CD4-positive, alpha-beta memory T cell (primary cell): ENCODE measurements at regions of chr2 and their contacts with region 1.

Region 1: GRCh38 chr2:136238286-136239078 is 120.5 kb upstream of the CXCR4 start:
- DNase-seq: peak; percentile 72 to 83 (median 75)
- H3K4me3 ChIP-seq: no peak overlapping the region
- H3K4me3 Mint-ChIP-seq: peak overlapping the region; percentile 4 to 75 (median 40)
- H3K27ac ChIP-seq: peak overlapping the region; percentile 39
- H3K27ac Mint-ChIP-seq: peak overlapping the region; percentile 73 to 99 (median 95)
- H3K4me1 ChIP-seq: peaks cover 51% of the 10 kb centered on the region
- H3K4me1 Mint-ChIP-seq: peaks cover 40 to 62% (median 54%) of the 10 kb centered on the region in 4 donors
- H3K27me3 ChIP-seq: no peaks in the 10 kb centered on the region
- H3K27me3 Mint-ChIP-seq: no peaks in the 10 kb centered on the region

Region 2: DNA sequence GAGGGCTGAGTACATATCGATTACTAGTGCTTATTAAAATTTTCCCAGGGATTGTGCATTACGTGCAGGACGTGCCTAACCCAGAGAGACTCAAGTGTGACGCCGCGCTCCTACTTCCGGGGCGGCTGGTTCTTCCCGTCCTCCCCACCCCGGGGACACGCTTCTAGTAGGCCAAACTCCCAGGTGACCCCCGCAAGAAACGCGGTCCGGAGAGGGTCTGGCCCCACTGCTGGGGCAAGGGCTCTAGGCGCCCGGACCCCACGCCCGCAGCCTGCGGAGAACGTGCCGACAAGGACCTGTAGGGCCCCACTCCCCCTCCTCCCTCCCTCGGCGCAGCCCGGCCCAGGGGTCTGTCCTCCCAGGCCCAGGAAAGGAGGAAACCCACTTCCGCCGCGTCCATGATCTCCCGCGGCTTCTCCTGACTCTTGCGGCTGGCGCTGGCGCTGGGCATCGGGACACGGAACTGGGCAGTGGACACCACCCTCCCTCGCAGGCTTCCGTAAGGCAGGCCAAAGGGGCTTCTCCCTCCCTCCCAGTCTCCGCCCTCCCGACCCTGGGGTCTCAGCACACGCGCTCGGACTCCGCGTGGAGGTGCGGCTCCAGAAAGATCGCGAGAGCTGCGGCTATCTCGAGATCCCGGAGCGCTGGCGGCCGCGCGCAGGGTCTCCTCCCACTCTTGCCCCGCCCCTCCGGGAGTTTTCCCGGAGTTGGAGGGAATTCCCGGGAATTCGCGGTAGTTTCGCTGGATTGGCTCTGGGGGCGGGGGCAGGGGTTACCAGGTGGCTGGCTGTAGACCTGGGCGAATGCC is 253.3 kb before region 1 on chr2 and contains the start of gene DARS1:
- CTCF ChIA-PET with region 1: interaction called, 3 read pairs
- POLR2A ChIA-PET with region 1: interaction called, 11 read pairs
- intact Hi-C with region 1: no loop called
- DNase-seq: peak; percentile 56 to 81 (median 78)
- H3K4me3 ChIP-seq: peak within 1 kb of the TSS; percentile 43 to 82
- H3K4me3 Mint-ChIP-seq: peak within 1 kb of the TSS; percentile 95 to 99 (median 98)
- H3K27ac ChIP-seq: peak within 1 kb of the TSS; percentile 99
- H3K27ac Mint-ChIP-seq: peak within 1 kb of the TSS; percentile 96 to 100 (median 99)
- H3K4me1 ChIP-seq: peaks cover 35% of the 10 kb centered on the region
- H3K4me1 Mint-ChIP-seq: peaks cover 26 to 61% (median 35%) of the 10 kb centered on the region in 4 donors
- H3K27me3 ChIP-seq: no peaks in the 10 kb centered on the region
- H3K27me3 Mint-ChIP-seq: no peaks in the 10 kb centered on the region
- total RNA-seq, gene DARS1: 84.9 to 90.1 TPM

Region 3: GRCh38 chr2:136212423-136213378 is 25.8 kb before region 1 on chr2:
- CTCF ChIA-PET with region 1: interaction called, 5 read pairs
- POLR2A ChIA-PET with region 1: interaction called, 25 read pairs
- intact Hi-C with region 1: no loop called
- DNase-seq: peak; percentile 53 to 70 (median 59)
- H3K4me3 ChIP-seq: no peak overlapping the region
- H3K4me3 Mint-ChIP-seq: peak overlapping the region in 7 of 8 donors; percentile 3 to 76 (median 45)
- H3K27ac ChIP-seq: peak overlapping the region; percentile 39
- H3K27ac Mint-ChIP-seq: peak overlapping the region; percentile 73 to 96 (median 90)
- H3K4me1 ChIP-seq: peaks cover 31% of the 10 kb centered on the region
- H3K4me1 Mint-ChIP-seq: peaks cover 25 to 66% (median 35%) of the 10 kb centered on the region in 4 donors
- H3K27me3 ChIP-seq: no peaks in the 10 kb centered on the region
- H3K27me3 Mint-ChIP-seq: no peaks in the 10 kb centered on the region

Region 4: DNA sequence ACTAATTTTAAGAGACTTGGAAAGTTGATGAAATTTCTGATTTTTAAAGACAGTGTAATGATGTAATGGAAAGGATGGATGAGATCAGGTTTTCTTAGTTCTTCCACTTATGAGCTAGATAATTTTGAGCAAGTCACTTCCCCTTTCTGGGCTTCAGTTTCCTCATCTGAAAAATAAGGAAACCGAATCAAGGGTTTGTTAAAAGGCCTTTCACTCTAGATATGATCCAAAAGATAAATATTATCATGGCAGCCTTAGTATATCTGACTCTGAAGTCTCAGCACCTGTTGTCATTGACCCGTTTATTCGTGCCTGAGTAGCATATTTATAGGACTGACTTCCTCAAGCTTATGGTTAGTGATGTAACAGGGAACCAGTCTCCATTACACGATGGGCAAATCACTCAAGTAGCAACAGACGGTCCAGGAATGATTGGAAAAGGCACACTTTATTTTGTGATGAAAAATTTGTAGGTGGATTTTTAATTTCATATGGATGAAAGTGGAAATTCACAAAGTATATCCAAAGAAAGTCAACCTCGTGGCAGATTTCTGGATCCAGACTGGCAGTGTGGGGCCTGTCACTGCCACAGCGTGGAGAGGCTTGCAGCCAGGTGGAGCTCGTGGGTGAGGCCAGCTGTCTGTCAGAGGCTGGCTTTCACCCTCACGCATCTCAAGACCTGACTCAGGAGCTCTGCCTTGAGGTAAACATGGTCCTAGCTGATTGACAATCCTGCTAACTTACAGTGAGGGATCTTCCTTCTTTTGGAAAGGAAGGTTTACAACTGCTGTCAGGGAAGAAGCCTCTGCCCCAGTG is 17.4 kb after region 1 on chr2:
- CTCF ChIA-PET with region 1: interaction called, 19 read pairs
- POLR2A ChIA-PET with region 1: interaction called, 9 read pairs
- intact Hi-C with region 1: no loop called
- DNase-seq: peak in 2 of 5 donors; percentile 16 to 21
- H3K4me3 ChIP-seq: no peak overlapping the region
- H3K4me3 Mint-ChIP-seq: no peak overlapping the region
- H3K27ac ChIP-seq: no peak overlapping the region
- H3K27ac Mint-ChIP-seq: peak overlapping the region in 5 of 7 donors; percentile 26 to 75 (median 38)
- H3K4me1 ChIP-seq: peaks cover 5% of the 10 kb centered on the region
- H3K4me1 Mint-ChIP-seq: peaks cover 7 to 28% (median 11%) of the 10 kb centered on the region in 4 donors
- H3K27me3 ChIP-seq: no peaks in the 10 kb centered on the region
- H3K27me3 Mint-ChIP-seq: no peaks in the 10 kb centered on the region

Region 5: DNA sequence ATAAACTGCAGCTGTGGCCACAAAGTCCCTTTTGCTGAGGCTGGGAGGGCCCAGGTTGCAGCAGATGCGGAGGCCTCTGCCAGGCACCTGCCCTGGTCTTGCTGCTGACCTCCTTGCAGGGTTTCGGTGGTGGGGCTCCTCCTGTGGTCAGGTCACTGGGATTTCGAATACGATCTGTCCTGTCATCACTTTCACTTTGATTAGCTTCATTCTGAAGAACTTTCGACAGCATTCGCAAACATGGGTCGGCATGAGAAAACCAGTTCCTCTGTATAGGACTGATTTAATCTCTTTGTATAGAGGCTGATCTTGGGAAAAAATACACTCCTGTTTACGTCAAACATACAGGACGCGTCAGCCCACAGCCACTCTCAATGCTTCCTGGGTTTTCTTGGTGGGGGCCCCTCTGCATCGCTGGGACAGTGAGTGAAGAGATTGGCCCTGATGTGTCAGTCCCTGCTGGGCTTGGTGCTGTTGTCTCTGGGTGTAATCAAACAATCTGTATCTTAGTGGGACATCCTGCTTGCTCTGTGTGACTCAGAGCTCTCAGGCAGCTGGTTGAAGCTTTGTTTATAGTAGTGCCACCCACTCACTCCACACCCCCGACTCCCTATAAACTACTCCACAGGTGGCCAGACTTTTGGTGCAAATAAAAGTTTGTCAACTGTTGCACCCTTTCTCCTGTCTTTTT is 88.8 kb after region 1 on chr2:
- CTCF ChIA-PET with region 1: interaction called, 4 read pairs
- POLR2A ChIA-PET with region 1: interaction called, 68 read pairs
- intact Hi-C with region 1: loop called (anchors 5 kb)
- DNase-seq: peak; percentile 88 to 96 (median 91)
- H3K4me3 ChIP-seq: peak overlapping the region; percentile 7 to 39
- H3K4me3 Mint-ChIP-seq: peak overlapping the region; percentile 67 to 90 (median 80)
- H3K27ac ChIP-seq: peak overlapping the region; percentile 69
- H3K27ac Mint-ChIP-seq: peak overlapping the region; percentile 91 to 99 (median 98)
- H3K4me1 ChIP-seq: peaks cover 62% of the 10 kb centered on the region
- H3K4me1 Mint-ChIP-seq: peaks cover 42 to 62% (median 51%) of the 10 kb centered on the region in 4 donors
- H3K27me3 ChIP-seq: no peaks in the 10 kb centered on the region
- H3K27me3 Mint-ChIP-seq: no peaks in the 10 kb centered on the region